PC-9 (cell line): ENCODE measurements at regions of chr10 and their contacts with region 1.

Region 1: GRCh38 chr10:107749231-107749630 is 584.7 kb upstream of the SORCS1 start:
- DNase-seq: no peak
- H3K4me3 ChIP-seq: no peak overlapping the region
- H3K27ac ChIP-seq: no peak overlapping the region
- H3K4me1 ChIP-seq: no peaks in the 10 kb centered on the region
- H3K27me3 ChIP-seq: no peaks in the 10 kb centered on the region
- CTCF ChIP-seq: no peak

Region 2: DNA sequence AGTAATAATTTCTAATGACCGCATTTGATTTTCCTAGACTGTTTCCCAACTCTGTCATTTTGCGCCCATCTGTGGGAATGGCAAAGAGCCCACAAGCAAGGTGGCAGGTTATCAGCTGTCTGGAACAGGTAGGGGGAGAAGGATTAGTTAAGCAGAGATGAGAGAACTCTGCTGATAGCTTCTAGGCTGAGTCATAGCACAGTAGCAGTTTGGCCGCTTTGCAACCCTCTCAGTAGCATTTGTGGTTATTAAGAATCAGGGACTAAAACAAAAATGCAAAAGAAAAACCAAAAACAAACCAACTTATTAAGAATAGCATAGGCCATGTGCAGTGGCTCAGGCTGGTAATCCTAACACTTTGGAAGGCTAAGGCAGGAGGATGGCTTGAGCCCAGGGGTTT is 18.0 kb after region 1 on chr10:
- CTCF ChIA-PET with region 1: no interaction called
- POLR2A ChIA-PET with region 1: interaction called, 16 read pairs
- intact Hi-C with region 1: no loop called
- DNase-seq: no peak
- H3K4me3 ChIP-seq: no peak overlapping the region
- H3K27ac ChIP-seq: no peak overlapping the region
- H3K4me1 ChIP-seq: no peaks in the 10 kb centered on the region
- H3K27me3 ChIP-seq: no peaks in the 10 kb centered on the region
- CTCF ChIP-seq: no peak